Heart left ventricle (tissue), 16 donors: ENCODE measurements at regions of chr19 and their contacts with region 1.

Region 1: GRCh38 chr19:17282488-17283255 is 971 bp downstream of the ANKLE1 start:
- DNase-seq: peak; percentile 77 to 91 (median 84)
- ATAC-seq: peak; percentile 83 to 96 (median 94)
- H3K4me3 ChIP-seq: peak overlapping the region in 10 of 12 donors; percentile 10 to 56 (median 42)
- H3K27ac ChIP-seq: no peak overlapping the region
- H3K4me1 ChIP-seq: peaks cover 0 to 17% (median 13%) of the 10 kb centered on the region in 12 donors
- H3K27me3 ChIP-seq: peaks cover 7 to 21% (median 14%) of the 10 kb centered on the region in 9 donors
- CTCF ChIP-seq: peak; percentile 90 to 98 (median 95)
- POLR2A ChIP-seq: no peak

Region 2: DNA sequence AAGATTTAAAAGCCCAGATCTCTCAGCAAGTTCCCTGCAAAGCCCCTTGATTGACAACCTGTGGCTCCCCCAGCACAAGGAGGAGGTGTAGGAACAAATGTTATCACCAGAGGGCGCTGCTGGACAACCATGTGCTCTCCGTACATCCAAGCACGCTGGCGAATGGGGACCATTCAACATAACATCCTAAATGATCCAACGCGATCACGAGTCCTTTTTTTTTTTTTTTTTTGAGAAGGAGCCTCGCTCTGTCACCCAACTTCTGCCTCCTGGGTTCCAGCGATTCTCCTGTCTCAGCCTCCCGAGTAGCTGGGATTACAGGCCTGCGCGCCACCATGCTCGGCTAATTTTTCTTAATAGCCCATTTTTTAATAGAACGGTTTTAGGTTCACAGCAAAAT is 511.1 kb before region 1 on chr19:
- intact Hi-C with region 1: loop called in 3 of 10 experiments (anchors 5 to 10 kb)
- DNase-seq: peak in 4 of 5 donors; percentile 69 to 84 (median 76)
- ATAC-seq: peak; percentile 71 to 88 (median 86)
- H3K4me3 ChIP-seq: no peak overlapping the region
- H3K27ac ChIP-seq: no peak overlapping the region
- H3K4me1 ChIP-seq: no peaks in the 10 kb centered on the region
- H3K27me3 ChIP-seq: no peaks in the 10 kb centered on the region
- CTCF ChIP-seq: peak; percentile 73 to 92 (median 84)
- POLR2A ChIP-seq: no peak

Region 3: GRCh38 chr19:17069218-17069617 is 213.5 kb before region 1 on chr19:
- intact Hi-C with region 1: loop called (anchors 1 to 5 kb)
- DNase-seq: no peak
- ATAC-seq: no peak
- H3K4me3 ChIP-seq: no peak overlapping the region
- H3K27ac ChIP-seq: no peak overlapping the region
- H3K4me1 ChIP-seq: peaks cover 0 to 25% (median 8%) of the 10 kb centered on the region in 12 donors
- H3K27me3 ChIP-seq: no peaks in the 10 kb centered on the region
- CTCF ChIP-seq: no peak
- POLR2A ChIP-seq: no peak

Region 4: DNA sequence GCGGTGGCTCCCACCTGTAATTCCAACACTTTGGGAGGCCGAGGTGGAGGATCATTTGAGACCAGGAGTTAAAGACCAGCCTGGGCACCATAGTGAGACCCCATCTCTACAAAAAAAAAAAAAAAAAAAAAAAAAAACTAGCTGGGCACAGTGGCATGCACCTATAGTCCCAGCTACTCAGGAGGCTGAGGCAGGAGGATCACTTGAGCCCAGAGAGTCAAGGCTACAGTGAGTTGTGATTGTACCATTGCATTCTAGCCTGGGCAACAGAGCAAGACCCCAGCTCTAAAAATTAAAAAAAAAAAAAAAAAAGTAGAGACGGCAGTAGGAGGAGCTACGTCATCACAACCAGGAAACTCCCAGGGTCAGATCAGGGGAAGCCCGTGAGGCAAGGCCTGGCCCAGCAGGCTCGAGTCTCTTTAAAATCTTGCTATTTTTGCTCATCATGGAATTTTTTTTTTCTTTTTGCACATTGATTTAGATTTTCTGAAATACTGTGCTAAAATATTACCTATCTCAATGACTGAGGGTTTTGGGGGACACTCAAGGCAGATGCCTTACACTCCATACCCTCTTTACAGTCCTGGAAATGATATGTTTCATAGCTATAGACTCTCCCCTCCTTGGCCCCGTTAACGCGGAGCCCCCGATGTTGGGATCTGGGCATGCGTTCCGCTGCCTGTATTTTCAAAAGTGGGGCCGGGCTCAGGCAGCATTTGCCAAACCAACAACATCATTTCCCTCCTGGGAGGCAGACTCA is 112.0 kb before region 1 on chr19:
- intact Hi-C with region 1: no loop called
- DNase-seq: no peak
- ATAC-seq: no peak
- H3K4me3 ChIP-seq: no peak overlapping the region
- H3K27ac ChIP-seq: no peak overlapping the region
- H3K4me1 ChIP-seq: no peaks in the 10 kb centered on the region
- H3K27me3 ChIP-seq: no peaks in the 10 kb centered on the region
- CTCF ChIP-seq: no peak
- POLR2A ChIP-seq: no peak

Region 5: DNA sequence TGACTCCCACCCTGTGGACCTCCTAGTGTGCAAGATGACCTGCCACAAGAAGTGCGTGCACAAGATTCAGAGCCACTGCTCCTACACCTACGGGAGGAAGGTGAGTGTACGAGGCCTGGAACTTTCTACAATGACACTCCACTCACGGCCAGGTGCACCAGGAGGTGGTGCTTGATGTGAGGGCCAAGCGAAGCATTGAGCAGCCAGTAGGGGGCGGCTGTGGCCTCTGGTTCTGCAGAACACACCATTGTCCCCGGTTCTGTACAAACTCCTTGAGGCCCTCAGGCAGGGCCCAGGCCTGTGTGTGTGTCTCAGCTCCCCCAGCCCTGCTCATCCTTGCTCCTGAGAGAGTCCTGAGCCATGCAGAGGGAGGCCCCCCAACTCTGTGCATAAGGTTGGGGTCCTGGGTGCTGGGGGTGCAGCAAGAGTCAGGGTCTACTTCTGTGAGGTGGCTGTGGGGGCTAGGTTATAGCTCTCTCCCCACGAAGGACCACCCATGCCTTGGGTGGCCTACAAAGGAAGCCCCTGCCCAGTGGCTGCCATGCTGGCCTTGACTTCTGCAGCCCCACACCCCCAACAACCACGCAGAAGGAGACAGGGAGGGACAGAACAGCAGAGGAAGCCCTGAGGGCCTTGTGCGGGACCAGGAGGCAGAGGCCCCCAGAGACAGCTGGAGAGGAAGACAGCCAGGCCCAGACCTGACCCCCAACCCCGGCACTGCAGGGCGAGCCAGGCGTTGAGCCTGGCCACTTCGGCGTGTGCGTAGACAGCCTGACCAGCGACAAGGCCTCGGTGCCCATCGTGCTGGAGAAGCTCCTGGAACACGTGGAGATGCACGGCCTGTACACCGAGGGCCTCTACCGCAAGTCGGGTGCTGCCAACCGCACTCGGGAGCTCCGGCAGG is 77.2 kb before region 1 on chr19:
- intact Hi-C with region 1: loop called (anchors 1 to 10 kb)
- DNase-seq: peak in 4 of 5 donors; percentile 49 to 71 (median 62)
- ATAC-seq: peak; percentile 50 to 67 (median 52)
- H3K4me3 ChIP-seq: no peak overlapping the region
- H3K27ac ChIP-seq: no peak overlapping the region
- H3K4me1 ChIP-seq: no peaks in the 10 kb centered on the region
- H3K27me3 ChIP-seq: no peaks in the 10 kb centered on the region
- CTCF ChIP-seq: peak; percentile 51 to 78 (median 62)
- POLR2A ChIP-seq: no peak

Region 6: DNA sequence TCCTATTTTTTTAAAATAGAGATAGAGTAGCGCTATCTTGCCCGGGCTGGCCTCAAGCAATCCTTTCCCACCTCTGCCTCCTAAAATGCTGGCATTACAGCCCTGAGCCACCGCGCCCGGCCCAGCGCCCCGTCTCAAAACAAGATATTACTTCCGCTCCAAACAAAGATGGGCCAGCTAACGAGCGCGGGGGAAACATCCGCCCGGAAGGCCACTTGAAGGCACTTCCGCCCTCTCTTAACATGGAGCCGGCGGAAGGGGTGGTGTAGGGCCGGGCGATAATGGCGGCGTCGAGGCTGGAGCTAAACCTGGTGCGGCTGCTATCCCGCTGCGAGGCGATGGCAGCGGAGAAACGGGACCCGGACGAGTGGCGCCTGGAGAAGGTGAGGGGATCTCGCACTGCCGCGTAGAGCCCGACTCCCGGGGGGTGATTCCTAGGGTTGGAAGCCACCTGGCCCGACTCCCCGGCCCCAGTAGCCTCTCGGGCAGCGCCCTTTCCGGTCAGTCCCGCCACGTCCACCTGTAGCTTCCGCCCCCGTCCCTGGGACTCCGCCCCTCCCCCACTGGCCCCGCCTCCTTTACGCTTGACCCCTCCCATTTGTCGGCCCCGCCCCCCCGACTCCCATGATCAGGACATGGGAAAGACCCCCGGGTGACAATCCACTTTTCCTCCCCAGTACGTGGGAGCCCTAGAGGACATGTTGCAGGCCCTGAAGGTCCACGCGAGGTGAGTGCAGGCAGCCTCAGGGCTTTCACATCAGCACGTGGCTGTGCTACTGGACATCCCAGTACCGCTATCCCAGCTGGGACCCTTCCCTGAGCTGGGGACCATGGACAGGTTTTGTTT is 67.3 kb before region 1 on chr19 and contains the start of gene USE1:
- intact Hi-C with region 1: loop called in 1 of 10 experiments (anchors 10 kb)
- DNase-seq: peak; percentile 91 to 95 (median 93)
- ATAC-seq: peak; percentile 95 to 97 (median 95)
- H3K4me3 ChIP-seq: peak within 1 kb of the TSS; percentile 38 to 83 (median 78)
- H3K27ac ChIP-seq: peak within 1 kb of the TSS; percentile 90 to 97 (median 94)
- H3K4me1 ChIP-seq: peaks cover 0 to 26% (median 11%) of the 10 kb centered on the region in 12 donors
- H3K27me3 ChIP-seq: no peaks in the 10 kb centered on the region
- CTCF ChIP-seq: no peak
- POLR2A ChIP-seq: peak in 1 of 2 donors; percentile 55
- total RNA-seq, gene USE1: 22.5 to 34.4 (median 25.8) TPM

Region 7: GRCh38 chr19:17260842-17261325 is 21.8 kb before region 1 on chr19:
- intact Hi-C with region 1: loop called in 2 of 10 experiments (anchors 2 kb)
- DNase-seq: peak; percentile 73 to 90 (median 83)
- ATAC-seq: peak; percentile 65 to 87 (median 84)
- H3K4me3 ChIP-seq: peak overlapping the region in 2 of 12 donors; percentile 9 to 17
- H3K27ac ChIP-seq: no peak overlapping the region
- H3K4me1 ChIP-seq: peaks cover 0 to 9% (median 5%) of the 10 kb centered on the region in 12 donors
- H3K27me3 ChIP-seq: no peaks in the 10 kb centered on the region
- CTCF ChIP-seq: peak; percentile 78 to 92 (median 88)
- POLR2A ChIP-seq: no peak